Right ventricle myocardium inferior (tissue), 1 donor: ENCODE measurements at regions of chr10 and their contacts with region 1.

Region 1: DNA sequence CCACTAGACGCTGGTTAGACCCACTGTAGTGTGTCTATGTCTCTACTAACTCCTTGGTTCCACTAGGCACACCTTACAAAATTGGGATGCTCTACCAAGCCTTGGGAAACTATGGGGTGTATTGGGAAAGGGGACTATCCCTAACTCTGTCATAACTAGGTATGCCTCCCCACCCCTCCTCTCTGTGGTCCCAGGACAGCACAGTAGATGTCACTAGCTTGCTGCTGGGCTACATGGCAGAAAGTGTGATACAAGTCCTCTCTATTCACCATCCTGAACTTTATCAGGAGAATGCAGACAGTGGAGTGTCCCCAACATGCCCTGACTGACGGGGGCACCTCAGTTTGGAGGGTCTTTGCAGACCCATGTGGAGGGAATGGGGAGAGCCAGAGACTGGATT is 30.3 kb upstream of the TMEM273 start:
- DNase-seq: no peak
- ATAC-seq: peak; percentile 62

Region 2: DNA sequence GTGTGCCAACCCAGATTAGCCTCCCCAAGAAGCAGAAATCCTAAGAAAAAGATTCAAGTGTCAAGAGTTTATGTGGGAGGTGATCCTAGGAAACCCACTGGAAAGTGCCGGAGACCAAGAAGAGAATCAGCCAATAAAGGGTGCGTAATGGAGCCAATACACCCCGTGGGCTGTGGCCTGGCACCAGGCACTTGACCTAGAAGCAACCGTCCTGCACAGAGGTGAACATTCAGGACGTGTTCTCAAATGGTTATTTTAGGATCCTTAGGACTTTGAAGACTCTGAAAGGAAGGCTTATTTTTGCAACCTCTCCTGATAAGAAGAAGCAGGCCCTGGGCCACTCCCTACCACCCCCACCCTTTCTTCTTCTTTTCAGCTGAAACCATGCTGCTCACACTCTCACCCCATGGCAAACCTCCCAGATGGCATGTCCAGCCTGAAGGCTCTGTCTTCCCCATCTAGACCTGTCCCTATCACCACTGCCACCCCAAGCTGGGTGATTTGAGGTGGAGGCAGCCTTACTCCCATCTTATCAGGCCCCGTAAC is 149.7 kb before region 1 on chr10:
- intact Hi-C with region 1: no loop called
- DNase-seq: no peak
- ATAC-seq: no peak

Region 3: DNA sequence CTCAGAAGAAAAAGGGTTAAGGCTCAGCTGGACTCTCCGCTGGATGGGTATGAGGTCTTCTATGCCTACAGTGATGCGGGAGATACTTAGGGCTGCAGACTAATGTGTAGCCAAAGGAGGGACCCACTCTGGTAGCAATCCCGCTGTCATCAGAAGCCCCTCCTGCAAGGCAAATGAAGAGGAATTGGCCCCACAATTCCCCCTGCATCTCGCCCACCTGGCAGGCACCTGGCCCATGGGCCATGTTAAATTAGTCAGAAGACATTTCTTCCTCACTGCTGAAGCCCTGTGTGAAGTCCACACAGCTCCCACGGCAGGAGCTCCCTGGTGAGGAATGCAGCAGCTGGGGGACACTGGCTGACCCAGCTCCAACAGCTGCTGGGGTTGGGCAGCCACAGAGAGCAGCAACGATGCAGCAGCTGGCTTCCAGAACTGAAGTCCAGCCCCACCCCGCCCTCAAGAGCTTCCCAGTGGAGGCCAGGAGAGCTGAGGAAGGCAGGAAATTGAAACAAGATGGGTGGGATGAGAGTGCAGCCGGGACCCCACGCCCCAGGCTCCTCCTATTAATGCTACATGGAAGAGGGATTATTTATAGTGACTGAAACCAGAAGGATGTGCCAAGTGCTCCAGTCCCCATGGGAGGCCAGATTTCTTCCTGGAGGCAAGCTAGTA is 108.7 kb before region 1 on chr10:
- intact Hi-C with region 1: no loop called
- DNase-seq: peak; percentile 85
- ATAC-seq: peak; percentile 87

Region 4: GRCh38 chr10:49362596-49363260 is 144.2 kb after region 1 on chr10:
- intact Hi-C with region 1: loop called (anchors 5 kb)
- DNase-seq: no peak
- ATAC-seq: no peak